ENCODE measurements at regions of chr1 and their contacts with region 1.

Region 1: GRCh38 chr1:63674238-63674864 is 81.1 kb downstream of the PGM1 start:
- DNase-seq: peak; percentile 65 to 81 (median 71)
- ATAC-seq: peak; percentile 88 to 96 (median 92)
- H3K4me3 ChIP-seq: no peak overlapping the region
- H3K27ac ChIP-seq: peak overlapping the region in 6 of 12 donors; percentile 31 to 43 (median 37)
- H3K4me1 ChIP-seq: peaks cover 0 to 10% (median 2%) of the 10 kb centered on the region in 12 donors
- H3K27me3 ChIP-seq: no peaks in the 10 kb centered on the region
- CTCF ChIP-seq: peak in 11 of 12 donors; percentile 39 to 73 (median 63)
- POLR2A ChIP-seq: no peak

Region 2: DNA sequence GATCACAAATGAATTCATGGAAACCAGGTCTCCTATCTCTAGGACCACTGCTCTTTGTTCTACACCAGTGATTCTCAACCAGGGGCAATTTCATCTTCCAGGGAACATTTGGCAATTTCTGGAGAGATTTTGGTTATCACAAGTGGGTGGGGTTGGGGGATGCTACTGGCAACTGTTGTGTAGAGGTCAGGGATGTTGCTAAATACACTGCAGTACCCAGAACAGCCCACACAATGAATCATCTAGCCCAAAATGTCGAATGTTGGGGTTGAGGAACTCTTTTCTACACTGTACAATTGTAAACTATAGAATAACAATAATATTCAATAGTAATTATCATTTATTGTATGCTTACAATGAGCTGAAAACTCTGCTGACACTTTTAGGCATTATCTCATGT is 473.4 kb after region 1 on chr1:
- intact Hi-C with region 1: loop called in 2 of 10 experiments (anchors 5 to 10 kb)
- DNase-seq: no peak
- ATAC-seq: no peak
- H3K4me3 ChIP-seq: no peak overlapping the region
- H3K27ac ChIP-seq: no peak overlapping the region
- H3K4me1 ChIP-seq: peaks cover 0 to 16% (median 0%) of the 10 kb centered on the region in 12 donors
- H3K27me3 ChIP-seq: no peaks in the 10 kb centered on the region
- CTCF ChIP-seq: no peak
- POLR2A ChIP-seq: no peak

Measured in heart left ventricle (tissue), 16 donors.